CD4-positive, alpha-beta memory T cell (primary cell): ENCODE measurements at regions of chr1 and their contacts with region 1.

Region 1: DNA sequence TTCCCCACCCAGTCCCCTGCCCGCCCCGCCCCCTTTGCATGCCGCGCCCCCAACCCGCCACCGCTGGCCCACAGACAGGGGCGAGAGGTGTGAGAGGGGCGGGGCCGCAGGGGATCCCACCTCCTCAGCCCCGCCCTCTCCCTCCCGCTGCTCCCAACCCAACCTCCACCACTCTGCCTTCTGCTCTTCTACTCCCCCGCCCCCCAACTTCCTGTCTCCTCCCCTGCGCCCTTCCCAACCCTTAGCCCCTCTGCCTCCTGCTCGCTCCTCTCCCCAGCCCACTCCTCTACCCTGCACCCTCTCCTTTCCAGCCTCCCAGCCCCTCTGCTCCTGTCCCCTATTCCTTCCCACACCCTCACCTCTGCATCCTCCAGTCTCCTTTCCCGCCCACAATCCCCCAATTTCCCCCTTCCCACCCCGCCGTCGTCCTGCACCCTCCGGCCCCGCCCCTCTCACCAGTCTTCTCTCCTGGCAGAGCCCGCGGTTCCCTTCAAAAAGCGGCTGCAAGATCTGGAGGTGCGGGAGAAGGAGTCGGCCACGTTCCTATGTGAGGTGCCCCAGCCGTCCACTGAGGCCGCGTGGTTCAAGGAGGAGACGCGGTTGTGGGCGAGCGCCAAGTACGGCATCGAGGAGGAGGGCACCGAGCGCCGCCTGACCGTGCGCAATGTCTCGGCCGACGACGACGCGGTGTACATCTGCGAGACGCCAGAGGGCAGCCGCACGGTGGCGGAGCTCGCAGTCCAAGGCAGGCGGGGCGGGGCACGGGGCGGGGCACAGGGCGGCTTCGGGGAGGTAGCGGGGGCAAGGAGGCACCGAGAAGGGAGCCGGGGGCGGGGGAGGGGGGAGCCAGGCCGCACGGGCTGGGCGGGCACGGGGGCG is 5.4 kb downstream of the OBSCN start:
- DNase-seq: peak; percentile 82 to 92 (median 84)
- H3K4me3 ChIP-seq: peak overlapping the region; percentile 52
- H3K4me3 Mint-ChIP-seq: peak overlapping the region; percentile 83 to 94 (median 89)
- H3K27ac ChIP-seq: peak overlapping the region; percentile 46
- H3K27ac Mint-ChIP-seq: peak overlapping the region; percentile 68 to 95 (median 90)
- H3K4me1 ChIP-seq: peaks cover 7% of the 10 kb centered on the region
- H3K4me1 Mint-ChIP-seq: peaks cover 3 to 17% (median 9%) of the 10 kb centered on the region in 4 donors
- H3K27me3 ChIP-seq: no peaks in the 10 kb centered on the region
- H3K27me3 Mint-ChIP-seq: no peaks in the 10 kb centered on the region

Region 2: DNA sequence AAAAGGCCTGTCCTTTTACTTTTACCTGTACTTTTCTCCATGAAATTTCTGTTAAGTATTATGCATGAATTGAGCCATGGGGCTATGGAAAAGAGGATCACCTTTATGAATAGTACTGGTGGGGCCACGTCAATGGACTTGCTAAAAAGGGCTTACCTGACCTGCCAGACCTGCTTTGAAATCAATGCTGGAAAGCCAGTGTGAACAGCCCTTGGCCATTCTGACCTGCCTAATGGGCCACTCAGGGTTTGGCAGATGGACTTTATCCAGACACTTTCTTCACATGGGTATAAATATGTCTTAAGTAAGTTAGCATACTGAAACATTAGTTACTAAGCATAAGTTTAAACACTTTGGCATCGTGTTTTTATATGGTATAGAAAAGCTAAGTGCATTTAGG is 81.4 kb before region 1 on chr1:
- CTCF ChIA-PET with region 1: interaction called, 5 read pairs
- POLR2A ChIA-PET with region 1: no interaction called
- intact Hi-C with region 1: loop called (anchors 1 kb)
- DNase-seq: no peak
- H3K4me3 ChIP-seq: no peak overlapping the region
- H3K4me3 Mint-ChIP-seq: no peak overlapping the region
- H3K27ac ChIP-seq: no peak overlapping the region
- H3K27ac Mint-ChIP-seq: no peak overlapping the region
- H3K4me1 ChIP-seq: peaks cover 5% of the 10 kb centered on the region
- H3K4me1 Mint-ChIP-seq: peaks cover 2 to 5% (median 4%) of the 10 kb centered on the region in 4 donors
- H3K27me3 ChIP-seq: no peaks in the 10 kb centered on the region
- H3K27me3 Mint-ChIP-seq: peaks cover 8 to 14% of the 10 kb centered on the region in 2 donors

Region 3: DNA sequence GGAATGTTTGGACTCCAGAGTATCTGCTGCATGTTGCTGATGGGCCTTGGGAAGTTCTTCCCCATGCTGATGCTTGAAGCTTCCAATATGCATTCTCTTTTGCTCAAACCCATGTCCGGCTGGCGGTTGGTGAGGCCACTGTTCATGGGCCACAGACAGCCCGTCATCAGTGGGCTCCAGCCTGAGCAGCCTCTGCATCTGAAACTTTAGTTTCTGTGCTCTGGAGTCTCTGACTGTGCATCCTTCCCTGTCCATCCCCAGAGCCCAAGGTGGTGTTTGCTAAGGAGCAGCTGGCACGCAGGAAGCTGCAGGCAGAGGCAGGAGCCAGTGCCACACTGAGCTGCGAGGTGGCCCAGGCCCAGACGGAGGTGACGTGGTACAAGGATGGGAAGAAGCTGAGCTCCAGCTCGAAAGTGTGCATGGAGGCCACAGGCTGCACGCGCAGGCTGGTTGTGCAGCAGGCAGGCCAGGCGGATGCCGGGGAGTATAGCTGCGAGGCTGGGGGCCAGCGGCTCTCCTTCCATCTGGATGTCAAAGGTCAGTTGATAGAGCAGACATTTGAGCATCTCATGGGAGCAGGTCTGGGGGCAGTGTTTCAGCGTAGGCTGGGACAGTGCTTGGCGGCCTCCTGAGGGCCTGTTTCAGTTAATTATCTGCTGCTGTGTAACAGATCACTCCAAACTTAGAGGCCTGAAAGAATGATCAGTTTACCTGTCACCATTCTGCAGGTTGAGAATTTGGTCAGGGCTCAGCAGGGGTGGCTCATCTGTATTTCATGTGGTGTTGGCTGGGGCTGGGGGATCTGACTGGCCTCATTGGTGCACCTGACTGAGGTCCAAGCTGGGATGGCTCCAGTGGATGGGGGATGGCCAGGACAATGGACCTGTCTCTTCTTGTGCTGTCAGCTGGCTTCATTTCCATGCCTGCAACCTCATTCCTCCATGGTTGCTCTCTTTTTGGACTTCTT is 11.3 kb after region 1 on chr1:
- CTCF ChIA-PET with region 1: interaction called, 13 read pairs
- POLR2A ChIA-PET with region 1: interaction called, 3 read pairs
- intact Hi-C with region 1: no loop called
- DNase-seq: no peak
- H3K4me3 ChIP-seq: no peak overlapping the region
- H3K4me3 Mint-ChIP-seq: peak overlapping the region in 1 of 8 donors; percentile 17
- H3K27ac ChIP-seq: no peak overlapping the region
- H3K27ac Mint-ChIP-seq: no peak overlapping the region
- H3K4me1 ChIP-seq: no peaks in the 10 kb centered on the region
- H3K4me1 Mint-ChIP-seq: peaks cover 0 to 4% (median 2%) of the 10 kb centered on the region in 4 donors
- H3K27me3 ChIP-seq: no peaks in the 10 kb centered on the region
- H3K27me3 Mint-ChIP-seq: no peaks in the 10 kb centered on the region

Region 4: GRCh38 chr1:228405987-228406265 is 192.7 kb after region 1 on chr1:
- CTCF ChIA-PET with region 1: no interaction called
- POLR2A ChIA-PET with region 1: interaction called, 4 read pairs
- intact Hi-C with region 1: loop called (anchors 2 kb)
- DNase-seq: no peak
- H3K4me3 ChIP-seq: peak overlapping the region; percentile 29 to 72
- H3K4me3 Mint-ChIP-seq: peak overlapping the region; percentile 92 to 97 (median 94)
- H3K27ac ChIP-seq: peak overlapping the region; percentile 81
- H3K27ac Mint-ChIP-seq: peak overlapping the region; percentile 47 to 92 (median 87)
- H3K4me1 ChIP-seq: peaks cover 52% of the 10 kb centered on the region
- H3K4me1 Mint-ChIP-seq: peaks cover 29 to 72% (median 50%) of the 10 kb centered on the region in 4 donors
- H3K27me3 ChIP-seq: no peaks in the 10 kb centered on the region
- H3K27me3 Mint-ChIP-seq: no peaks in the 10 kb centered on the region

Region 5: GRCh38 chr1:228434686-228435085 is 221.5 kb after region 1 on chr1:
- CTCF ChIA-PET with region 1: no interaction called
- POLR2A ChIA-PET with region 1: no interaction called
- intact Hi-C with region 1: no loop called
- DNase-seq: no peak
- H3K4me3 ChIP-seq: no peak overlapping the region
- H3K4me3 Mint-ChIP-seq: no peak overlapping the region
- H3K27ac ChIP-seq: no peak overlapping the region
- H3K27ac Mint-ChIP-seq: no peak overlapping the region
- H3K4me1 ChIP-seq: peaks cover 10% of the 10 kb centered on the region
- H3K4me1 Mint-ChIP-seq: peaks cover 1 to 5% (median 3%) of the 10 kb centered on the region in 4 donors
- H3K27me3 ChIP-seq: no peaks in the 10 kb centered on the region
- H3K27me3 Mint-ChIP-seq: peaks cover 18 to 26% of the 10 kb centered on the region in 2 donors

Region 6: DNA sequence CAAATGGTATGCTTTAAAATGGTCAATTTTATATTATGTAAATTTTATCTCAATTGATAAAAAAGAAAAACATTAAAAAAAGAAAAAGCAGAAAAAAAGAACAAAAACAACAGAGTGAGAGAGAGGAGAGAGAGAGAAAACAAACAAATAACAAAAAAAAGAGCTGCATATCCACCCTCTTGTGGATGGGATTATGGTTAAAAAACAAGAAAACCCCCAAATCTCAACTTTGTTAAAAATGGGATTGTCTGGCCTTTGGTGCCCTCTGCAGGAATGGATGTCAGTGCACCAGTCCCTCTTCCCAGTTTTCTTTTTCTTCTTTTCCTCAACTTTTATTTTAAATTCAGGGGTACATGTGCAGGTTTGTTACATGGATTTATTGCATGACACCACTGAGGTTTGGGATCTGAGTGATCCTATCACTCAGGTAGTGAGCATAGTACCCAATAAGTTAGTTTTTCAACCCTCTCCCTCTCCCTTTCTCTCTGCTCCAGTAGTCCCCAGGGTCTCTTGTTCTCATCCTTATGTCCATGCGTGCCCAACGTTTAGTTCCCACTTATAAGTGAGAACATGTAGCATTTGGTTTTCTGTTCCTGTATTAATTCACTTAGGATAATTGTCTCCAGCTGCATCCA is 302.1 kb after region 1 on chr1:
- CTCF ChIA-PET with region 1: no interaction called
- POLR2A ChIA-PET with region 1: no interaction called
- intact Hi-C with region 1: loop called (anchors 1 kb)
- DNase-seq: peak in 4 of 5 donors; percentile 44 to 48 (median 45)
- H3K4me3 ChIP-seq: no peak overlapping the region
- H3K4me3 Mint-ChIP-seq: no peak overlapping the region
- H3K27ac ChIP-seq: no peak overlapping the region
- H3K27ac Mint-ChIP-seq: peak overlapping the region in 1 of 7 donors; percentile 29
- H3K4me1 ChIP-seq: peaks cover 14% of the 10 kb centered on the region
- H3K4me1 Mint-ChIP-seq: peaks cover 7 to 21% (median 13%) of the 10 kb centered on the region in 4 donors
- H3K27me3 ChIP-seq: no peaks in the 10 kb centered on the region
- H3K27me3 Mint-ChIP-seq: peaks cover 18 to 20% of the 10 kb centered on the region in 2 donors